Lower leg skin (tissue), 4 donors: ENCODE measurements at regions of chr20 and their contacts with region 1.

Region 1: DNA sequence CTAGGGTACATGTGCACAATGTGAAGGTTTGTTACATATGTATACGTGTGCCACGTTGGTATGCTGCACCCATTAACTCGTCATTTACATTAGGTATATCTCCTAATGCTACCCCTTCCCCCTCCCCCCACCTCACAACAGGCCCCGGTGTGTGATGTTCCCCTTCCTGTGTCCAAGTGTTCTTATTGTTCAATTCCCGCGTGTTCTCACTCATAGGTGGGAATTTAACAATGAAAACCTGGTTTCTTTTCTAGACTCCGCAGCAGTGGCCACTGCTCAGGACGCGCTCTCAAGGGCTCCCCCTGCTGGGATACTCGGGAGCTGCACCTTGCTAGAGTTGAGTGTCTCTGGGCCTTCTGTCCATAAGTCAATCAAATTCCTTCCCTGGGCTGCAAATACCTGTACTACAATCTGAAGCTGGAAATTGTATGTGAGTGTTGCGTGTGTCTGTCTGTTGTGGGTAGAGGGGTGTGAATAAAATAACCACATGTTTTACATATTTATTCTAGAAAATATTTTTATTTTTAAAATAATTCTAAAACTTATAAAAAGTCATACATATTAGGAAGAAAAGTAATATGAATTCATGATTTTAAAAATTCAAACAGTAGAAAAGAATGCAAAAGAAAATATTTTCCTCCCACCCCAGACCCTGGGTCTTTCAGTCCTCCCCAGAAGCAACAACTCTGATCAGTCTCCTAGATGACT is 8.2 kb upstream of the CEP250 start:
- DNase-seq: peak; percentile 86 to 97
- H3K4me3 ChIP-seq: no peak overlapping the region
- CTCF ChIP-seq: peak in 1 of 3 donors; percentile 82
- POLR2A ChIP-seq: no peak

Region 2: GRCh38 chr20:35297155-35297554 is 150.1 kb before region 1 on chr20:
- intact Hi-C with region 1: loop called (anchors 5 kb)
- DNase-seq: no peak
- H3K4me3 ChIP-seq: no peak overlapping the region
- CTCF ChIP-seq: no peak
- POLR2A ChIP-seq: no peak